ENCODE measurements at regions of chr2 and their contacts with region 1.

Region 1: DNA sequence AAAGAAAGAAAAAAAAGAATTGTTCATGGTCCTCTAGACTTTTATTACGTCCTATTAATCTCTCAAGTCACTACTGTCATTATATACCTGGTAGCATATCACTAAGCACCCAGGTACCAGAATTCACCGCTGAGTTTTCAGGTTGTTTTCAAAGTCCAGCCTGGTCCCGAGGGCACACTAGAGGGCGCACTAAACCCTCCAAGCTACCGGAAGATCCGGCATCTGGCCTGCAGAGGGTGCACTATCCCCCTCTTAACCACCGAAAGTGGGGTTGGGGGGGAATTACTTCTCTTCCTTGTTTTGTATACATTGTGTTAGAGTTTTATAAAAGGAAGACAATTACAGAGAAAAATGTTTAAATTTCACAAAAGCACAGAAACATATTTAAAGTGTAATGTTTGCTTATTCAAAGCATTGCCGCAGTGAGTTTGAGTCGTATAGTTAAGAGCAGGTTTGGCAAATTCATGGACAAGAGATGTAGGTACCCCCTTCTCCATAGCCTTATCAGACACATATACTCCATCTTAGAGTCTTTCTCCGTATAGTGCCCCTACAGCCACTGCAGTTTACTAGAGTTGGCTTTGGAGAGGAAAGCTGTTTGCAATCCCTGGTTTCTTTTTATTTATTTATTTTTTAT is 19.2 kb downstream of the MOGAT1 start:
- DNase-seq: peak; percentile 52 to 77 (median 59)
- H3K4me3 ChIP-seq: no peak overlapping the region
- H3K4me3 Mint-ChIP-seq: no peak overlapping the region
- H3K27ac ChIP-seq: no peak overlapping the region
- H3K27ac Mint-ChIP-seq: no peak overlapping the region
- H3K4me1 ChIP-seq: no peaks in the 10 kb centered on the region
- H3K4me1 Mint-ChIP-seq: peaks cover 2 to 11% (median 3%) of the 10 kb centered on the region in 3 donors
- H3K27me3 ChIP-seq: no peaks in the 10 kb centered on the region
- H3K27me3 Mint-ChIP-seq: peaks cover 7 to 13% of the 10 kb centered on the region in 2 donors

Region 2: DNA sequence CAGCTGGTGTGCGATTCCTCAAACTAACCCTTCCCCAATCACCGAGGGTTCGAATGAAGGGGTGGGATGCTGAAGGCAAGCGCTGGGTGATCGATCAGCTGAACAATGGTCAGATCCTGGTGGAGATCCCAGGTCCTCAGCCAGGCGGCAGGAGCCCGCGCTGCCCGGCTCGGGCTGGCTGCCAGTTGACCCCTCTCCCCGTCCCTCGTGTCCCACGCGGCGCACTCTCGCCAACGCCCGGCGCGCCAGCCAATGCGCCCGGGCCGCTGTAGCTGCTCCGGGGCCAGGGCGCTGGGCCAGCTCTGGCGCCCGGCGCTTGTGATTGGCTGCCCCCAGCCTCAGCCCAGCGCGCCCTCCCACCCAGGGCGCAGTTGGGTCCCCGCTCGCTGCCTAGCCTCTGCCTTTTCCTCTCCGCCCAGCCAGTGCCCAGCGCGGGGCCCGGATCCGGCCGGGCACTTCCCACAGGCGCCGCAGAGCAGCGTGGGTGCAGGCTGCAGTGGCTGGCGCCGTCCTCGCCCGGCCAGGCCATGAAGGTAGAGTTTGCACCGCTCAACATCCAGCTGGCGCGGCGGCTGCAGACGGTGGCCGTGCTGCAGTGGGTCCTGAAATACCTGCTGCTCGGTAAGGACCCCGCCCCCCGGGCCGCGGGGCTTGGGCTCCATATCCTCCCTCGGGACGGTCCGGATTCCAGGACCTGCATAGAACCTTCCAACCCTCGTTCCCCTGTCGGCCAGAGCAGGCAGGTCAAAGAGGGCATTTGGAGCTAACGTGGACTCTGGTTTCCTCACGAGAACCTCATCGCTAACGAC is 19.2 kb before region 1 on chr2 and contains the start of gene MOGAT1:
- CTCF ChIA-PET with region 1: interaction called, 16 read pairs
- POLR2A ChIA-PET with region 1: no interaction called
- DNase-seq: no peak
- H3K4me3 ChIP-seq: no peak within 1 kb of the TSS
- H3K4me3 Mint-ChIP-seq: peak within 1 kb of the TSS in 6 of 7 donors; percentile 40 to 76 (median 52)
- H3K27ac ChIP-seq: no peak within 1 kb of the TSS
- H3K27ac Mint-ChIP-seq: no peak within 1 kb of the TSS
- H3K4me1 ChIP-seq: no peaks in the 10 kb centered on the region
- H3K4me1 Mint-ChIP-seq: peaks cover 8 to 14% (median 11%) of the 10 kb centered on the region in 3 donors
- H3K27me3 ChIP-seq: peaks cover 6% of the 10 kb centered on the region
- H3K27me3 Mint-ChIP-seq: peaks cover 34 to 72% of the 10 kb centered on the region in 2 donors
- total RNA-seq, gene MOGAT1: not detected

Region 3: DNA sequence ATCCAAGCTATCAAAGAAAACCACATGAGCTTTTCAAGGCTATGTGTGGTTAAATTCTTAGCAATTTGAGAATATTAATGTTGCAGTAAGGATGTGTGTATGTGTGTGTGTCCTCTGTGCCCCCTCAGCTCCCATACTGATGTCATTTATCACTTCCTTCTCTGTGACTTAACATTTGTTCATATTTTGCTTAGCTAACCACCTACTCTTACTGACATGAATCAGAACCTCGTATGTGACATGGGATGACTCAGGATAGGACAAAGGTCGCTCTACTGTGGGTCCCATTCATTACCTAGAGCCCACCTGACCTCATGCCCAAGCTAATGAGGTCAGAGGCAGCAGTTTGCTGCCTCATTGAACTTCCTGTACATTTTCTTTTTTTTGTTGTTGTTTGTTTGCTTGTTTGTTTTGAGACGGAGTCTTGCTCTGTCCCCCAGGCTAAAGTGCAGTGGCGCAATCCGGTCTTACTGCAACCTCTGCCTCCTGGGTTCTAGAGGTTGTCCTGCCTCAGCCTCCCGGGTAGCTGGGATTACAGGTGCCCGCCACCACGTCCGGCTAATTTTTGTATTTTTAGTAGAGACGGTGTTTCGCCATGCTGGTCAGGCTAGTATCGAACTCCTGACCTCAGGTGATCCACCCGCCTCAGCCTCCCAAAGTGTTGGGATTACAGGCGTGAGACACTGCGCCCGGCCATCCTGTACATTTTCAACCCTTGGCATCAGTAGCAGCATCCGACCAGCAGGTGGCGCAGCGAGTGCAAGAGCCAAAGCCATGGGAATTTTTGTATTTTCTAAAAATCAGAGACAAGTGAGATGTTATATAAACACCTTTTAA is 17.2 kb after region 1 on chr2:
- CTCF ChIA-PET with region 1: interaction called, 18 read pairs
- POLR2A ChIA-PET with region 1: no interaction called
- DNase-seq: peak; percentile 49 to 77 (median 58)
- H3K4me3 ChIP-seq: no peak overlapping the region
- H3K4me3 Mint-ChIP-seq: no peak overlapping the region
- H3K27ac ChIP-seq: no peak overlapping the region
- H3K27ac Mint-ChIP-seq: no peak overlapping the region
- H3K4me1 ChIP-seq: no peaks in the 10 kb centered on the region
- H3K4me1 Mint-ChIP-seq: no peaks in the 10 kb centered on the region
- H3K27me3 ChIP-seq: peaks cover 6% of the 10 kb centered on the region
- H3K27me3 Mint-ChIP-seq: peaks cover 27 to 68% of the 10 kb centered on the region in 2 donors